Caco-2 (cell line): ENCODE measurements at regions of chr11 and their contacts with region 1.

Region 1: GRCh38 chr11:5476184-5476819 is 12.2 kb upstream of the OR52D1 start:
- DNase-seq: peak in 1 of 2 experiments; percentile 43
- H3K4me3 ChIP-seq: no peak overlapping the region
- H3K4me3 Mint-ChIP-seq: no peak overlapping the region
- H3K27ac Mint-ChIP-seq: no peak overlapping the region
- H3K4me1 ChIP-seq: no peaks in the 10 kb centered on the region
- H3K4me1 Mint-ChIP-seq: no peaks in the 10 kb centered on the region
- H3K27me3 ChIP-seq: no peaks in the 10 kb centered on the region
- H3K27me3 Mint-ChIP-seq: no peaks in the 10 kb centered on the region
- CTCF ChIP-seq: peak; percentile 67 to 71

Region 2: DNA sequence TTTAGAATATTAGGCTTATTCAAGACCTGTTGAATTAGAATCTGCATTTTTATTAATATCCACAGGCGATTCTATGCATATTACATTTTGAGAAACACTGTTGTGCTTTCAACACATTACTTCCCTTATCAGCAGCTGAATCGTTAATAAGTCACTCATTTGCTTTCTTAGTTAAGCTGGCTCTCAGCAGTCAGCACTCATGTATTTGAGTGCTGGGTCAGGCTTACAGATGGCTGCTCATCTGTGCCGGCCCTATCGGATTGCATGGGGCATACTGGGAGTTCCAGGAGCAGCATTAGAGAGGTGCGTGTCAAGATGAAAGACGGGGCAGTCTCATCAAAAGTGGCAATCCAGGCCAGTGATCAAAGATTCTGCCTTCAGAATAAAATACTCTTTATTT is 492.5 kb before region 1 on chr11:
- CTCF ChIA-PET with region 1: no interaction called
- POLR2A ChIA-PET with region 1: no interaction called
- intact Hi-C with region 1: no loop called
- DNase-seq: peak in 1 of 2 experiments; percentile 39
- H3K4me3 ChIP-seq: no peak overlapping the region
- H3K4me3 Mint-ChIP-seq: no peak overlapping the region
- H3K27ac Mint-ChIP-seq: no peak overlapping the region
- H3K4me1 ChIP-seq: no peaks in the 10 kb centered on the region
- H3K4me1 Mint-ChIP-seq: peaks cover 11% of the 10 kb centered on the region
- H3K27me3 ChIP-seq: no peaks in the 10 kb centered on the region
- H3K27me3 Mint-ChIP-seq: peaks cover 6% of the 10 kb centered on the region
- CTCF ChIP-seq: no peak

Region 3: GRCh38 chr11:5581014-5581413 is 104.7 kb after region 1 on chr11:
- CTCF ChIA-PET with region 1: no interaction called
- POLR2A ChIA-PET with region 1: no interaction called
- intact Hi-C with region 1: no loop called
- DNase-seq: no peak
- H3K4me3 ChIP-seq: no peak overlapping the region
- H3K4me3 Mint-ChIP-seq: no peak overlapping the region
- H3K27ac Mint-ChIP-seq: no peak overlapping the region
- H3K4me1 ChIP-seq: no peaks in the 10 kb centered on the region
- H3K4me1 Mint-ChIP-seq: no peaks in the 10 kb centered on the region
- H3K27me3 ChIP-seq: no peaks in the 10 kb centered on the region
- H3K27me3 Mint-ChIP-seq: no peaks in the 10 kb centered on the region
- CTCF ChIP-seq: no peak

Region 4: DNA sequence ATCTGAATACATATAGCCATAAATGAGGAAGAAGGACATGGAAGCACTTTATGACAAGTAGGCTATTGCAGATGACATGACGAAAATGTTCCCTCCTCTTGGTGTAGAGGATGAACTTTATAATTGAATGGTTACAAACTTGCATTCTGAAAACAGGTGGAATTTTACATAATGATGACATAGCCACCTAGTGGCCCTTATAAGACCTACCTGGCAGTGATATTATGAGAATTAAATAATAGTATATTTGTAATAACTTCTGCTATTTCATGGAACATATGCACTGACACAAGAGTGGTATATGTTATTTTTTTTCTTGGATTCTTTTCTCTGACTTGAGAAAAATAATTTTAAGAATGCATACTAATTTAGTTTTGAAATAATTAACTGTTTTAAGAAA is 236.2 kb after region 1 on chr11:
- CTCF ChIA-PET with region 1: no interaction called
- POLR2A ChIA-PET with region 1: no interaction called
- intact Hi-C with region 1: loop called (anchors 2 kb)
- DNase-seq: no peak
- H3K4me3 ChIP-seq: no peak overlapping the region
- H3K4me3 Mint-ChIP-seq: no peak overlapping the region
- H3K27ac Mint-ChIP-seq: no peak overlapping the region
- H3K4me1 ChIP-seq: no peaks in the 10 kb centered on the region
- H3K4me1 Mint-ChIP-seq: no peaks in the 10 kb centered on the region
- H3K27me3 ChIP-seq: no peaks in the 10 kb centered on the region
- H3K27me3 Mint-ChIP-seq: peaks cover 6% of the 10 kb centered on the region
- CTCF ChIP-seq: peak; percentile 38 to 57

Region 5: GRCh38 chr11:6431861-6432260 is 955.6 kb after region 1 on chr11:
- CTCF ChIA-PET with region 1: no interaction called
- POLR2A ChIA-PET with region 1: no interaction called
- intact Hi-C with region 1: no loop called
- DNase-seq: no peak
- H3K4me3 ChIP-seq: no peak overlapping the region
- H3K4me3 Mint-ChIP-seq: no peak overlapping the region
- H3K27ac Mint-ChIP-seq: no peak overlapping the region
- H3K4me1 ChIP-seq: peaks cover 20% of the 10 kb centered on the region
- H3K4me1 Mint-ChIP-seq: peaks cover 31% of the 10 kb centered on the region
- H3K27me3 ChIP-seq: no peaks in the 10 kb centered on the region
- H3K27me3 Mint-ChIP-seq: no peaks in the 10 kb centered on the region
- CTCF ChIP-seq: no peak